Right cardiac atrium (tissue), 5 donors: ENCODE measurements at regions of chr6 and their contacts with region 1.

Region 1: DNA sequence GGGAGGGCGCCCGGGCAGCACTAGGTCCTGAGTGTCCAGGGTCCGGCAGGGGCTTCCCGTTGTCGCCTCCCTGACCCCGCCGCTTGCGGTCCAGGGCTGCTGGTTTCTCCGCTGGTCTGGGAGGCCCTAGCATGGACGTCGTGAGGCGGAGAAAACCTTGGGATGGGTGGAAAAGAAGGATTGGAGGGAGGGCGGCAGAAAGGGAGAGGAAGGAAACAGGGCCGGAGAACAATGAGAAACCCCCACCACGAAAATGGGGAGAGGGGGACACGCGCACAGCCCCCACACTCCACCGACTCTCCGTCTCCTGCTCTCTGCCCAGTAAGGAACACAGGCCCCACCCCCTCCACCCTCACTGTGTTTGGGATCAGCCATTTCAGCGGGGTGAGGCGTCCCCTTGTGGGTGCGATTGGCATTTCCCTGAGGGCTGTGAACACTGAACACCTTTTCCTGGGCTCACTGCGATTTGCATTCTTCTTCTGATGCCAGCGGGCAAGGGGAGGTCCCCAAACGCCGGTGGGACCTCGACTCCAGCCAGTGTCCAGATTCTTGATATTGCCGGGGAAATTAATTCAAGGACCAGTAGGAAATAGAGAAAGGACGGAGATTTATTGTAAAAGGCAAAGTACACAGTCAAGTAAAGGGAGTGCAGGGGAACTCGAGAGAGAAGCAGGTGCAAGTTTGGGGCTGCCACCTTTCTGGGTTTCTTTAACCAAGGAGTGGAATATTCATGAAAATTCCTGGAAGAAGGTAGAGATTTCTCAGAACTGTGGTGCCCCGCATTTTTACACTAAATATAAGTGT is 3.3 kb upstream of the RAET1G start:
- DNase-seq: peak; percentile 88 to 97 (median 94)
- ATAC-seq: peak; percentile 92 to 94
- H3K4me3 ChIP-seq: peak overlapping the region; percentile 45
- H3K27ac ChIP-seq: peak overlapping the region; percentile 6
- H3K4me1 ChIP-seq: no peaks in the 10 kb centered on the region
- H3K27me3 ChIP-seq: no peaks in the 10 kb centered on the region

Region 2: DNA sequence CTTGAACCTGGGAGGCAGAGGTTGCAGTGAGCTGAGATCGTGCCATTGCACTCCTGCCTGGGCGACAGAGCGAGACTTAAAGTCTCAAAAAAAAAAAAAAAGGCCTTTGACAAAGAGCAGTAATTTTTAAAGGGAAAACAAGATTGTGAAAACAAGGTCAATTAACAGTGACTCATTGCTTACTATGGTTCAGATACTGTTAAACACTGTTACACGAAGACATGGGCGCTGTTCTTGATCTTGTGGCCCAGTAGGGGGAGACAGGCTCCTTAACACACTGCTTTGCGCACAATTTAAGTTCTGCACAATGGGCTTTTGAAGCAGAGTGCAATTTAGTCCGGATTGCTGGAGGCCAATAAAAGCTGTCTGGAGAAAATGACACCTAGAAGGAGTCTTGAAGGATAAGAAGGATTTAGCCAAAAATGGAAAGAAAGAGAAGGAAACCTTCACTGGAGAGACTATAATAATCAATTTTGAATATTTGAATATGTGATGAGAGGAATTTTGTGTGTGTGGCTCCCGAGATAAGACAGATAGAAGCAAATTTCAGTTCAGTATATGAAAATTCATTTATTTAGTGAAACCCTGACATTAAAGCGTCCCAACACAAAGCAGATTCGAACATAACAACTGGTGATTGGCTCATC is 202.3 kb before region 1 on chr6:
- intact Hi-C with region 1: loop called in 1 of 4 experiments (anchors 10 kb)
- DNase-seq: peak in 1 of 3 donors; percentile 35
- ATAC-seq: peak; percentile 83 to 88
- H3K4me3 ChIP-seq: no peak overlapping the region
- H3K27ac ChIP-seq: no peak overlapping the region
- H3K4me1 ChIP-seq: no peaks in the 10 kb centered on the region
- H3K27me3 ChIP-seq: no peaks in the 10 kb centered on the region

Region 3: GRCh38 chr6:149746147-149746946 is 179.8 kb before region 1 on chr6 and contains the start of gene NUP43:
- intact Hi-C with region 1: no loop called
- DNase-seq: peak; percentile 96 to 99 (median 96)
- ATAC-seq: peak; percentile 80 to 82
- H3K4me3 ChIP-seq: peak within 1 kb of the TSS; percentile 82
- H3K27ac ChIP-seq: peak within 1 kb of the TSS; percentile 71
- H3K4me1 ChIP-seq: no peaks in the 10 kb centered on the region
- H3K27me3 ChIP-seq: no peaks in the 10 kb centered on the region
- total RNA-seq, gene NUP43: 22.5 to 24.9 (median 23.6) TPM

Region 4: GRCh38 chr6:149834513-149835481 is 91.4 kb before region 1 on chr6:
- intact Hi-C with region 1: loop called (anchors 2 to 5 kb)
- DNase-seq: peak in 1 of 3 donors; percentile 60
- ATAC-seq: peak; percentile 38 to 47
- H3K4me3 ChIP-seq: no peak overlapping the region
- H3K27ac ChIP-seq: no peak overlapping the region
- H3K4me1 ChIP-seq: no peaks in the 10 kb centered on the region
- H3K27me3 ChIP-seq: no peaks in the 10 kb centered on the region

Region 5: GRCh38 chr6:149864578-149865535 is 61.3 kb before region 1 on chr6:
- intact Hi-C with region 1: loop called in 1 of 4 experiments (anchors 5 kb)
- DNase-seq: peak in 1 of 3 donors; percentile 36
- ATAC-seq: peak; percentile 41 to 66
- H3K4me3 ChIP-seq: peak overlapping the region; percentile 77
- H3K27ac ChIP-seq: peak overlapping the region; percentile 61
- H3K4me1 ChIP-seq: no peaks in the 10 kb centered on the region
- H3K27me3 ChIP-seq: no peaks in the 10 kb centered on the region

Region 6: DNA sequence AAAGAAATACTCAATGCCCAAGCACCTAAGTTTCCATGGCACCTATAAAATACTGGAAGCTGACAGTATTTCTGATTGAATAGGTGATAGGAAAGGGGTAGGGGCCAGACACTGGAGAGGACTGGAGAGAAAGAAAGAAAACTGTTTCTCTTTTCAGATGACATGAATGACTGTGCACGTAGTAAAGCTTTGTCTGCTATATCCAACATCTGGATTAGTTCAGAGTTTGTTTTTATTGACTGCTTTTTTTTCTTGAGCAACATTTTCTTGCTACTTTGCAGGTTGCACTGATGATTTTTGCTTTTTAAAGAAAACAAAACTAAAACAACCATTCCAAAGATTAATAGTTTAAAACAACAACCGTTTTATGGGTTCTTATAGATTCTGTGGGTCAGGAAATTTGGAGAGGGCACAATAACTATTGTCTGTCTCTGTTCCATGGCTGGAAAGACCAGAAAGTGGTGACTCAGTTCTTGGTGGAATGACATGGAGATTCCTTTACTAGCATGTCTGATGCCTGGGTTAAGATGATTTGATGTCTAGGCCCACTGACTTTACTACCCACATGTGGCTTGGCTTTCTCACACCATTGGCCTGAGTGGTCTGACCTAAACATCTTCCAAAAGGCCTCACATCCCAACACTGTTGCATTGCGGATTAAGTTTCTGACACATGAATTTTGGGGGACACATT is 49.8 kb before region 1 on chr6:
- intact Hi-C with region 1: no loop called
- DNase-seq: no peak
- ATAC-seq: no peak
- H3K4me3 ChIP-seq: no peak overlapping the region
- H3K27ac ChIP-seq: no peak overlapping the region
- H3K4me1 ChIP-seq: peaks cover 2% of the 10 kb centered on the region
- H3K27me3 ChIP-seq: no peaks in the 10 kb centered on the region